ENCODE measurements at regions of chr7 and their contacts with region 1.

Region 1: DNA sequence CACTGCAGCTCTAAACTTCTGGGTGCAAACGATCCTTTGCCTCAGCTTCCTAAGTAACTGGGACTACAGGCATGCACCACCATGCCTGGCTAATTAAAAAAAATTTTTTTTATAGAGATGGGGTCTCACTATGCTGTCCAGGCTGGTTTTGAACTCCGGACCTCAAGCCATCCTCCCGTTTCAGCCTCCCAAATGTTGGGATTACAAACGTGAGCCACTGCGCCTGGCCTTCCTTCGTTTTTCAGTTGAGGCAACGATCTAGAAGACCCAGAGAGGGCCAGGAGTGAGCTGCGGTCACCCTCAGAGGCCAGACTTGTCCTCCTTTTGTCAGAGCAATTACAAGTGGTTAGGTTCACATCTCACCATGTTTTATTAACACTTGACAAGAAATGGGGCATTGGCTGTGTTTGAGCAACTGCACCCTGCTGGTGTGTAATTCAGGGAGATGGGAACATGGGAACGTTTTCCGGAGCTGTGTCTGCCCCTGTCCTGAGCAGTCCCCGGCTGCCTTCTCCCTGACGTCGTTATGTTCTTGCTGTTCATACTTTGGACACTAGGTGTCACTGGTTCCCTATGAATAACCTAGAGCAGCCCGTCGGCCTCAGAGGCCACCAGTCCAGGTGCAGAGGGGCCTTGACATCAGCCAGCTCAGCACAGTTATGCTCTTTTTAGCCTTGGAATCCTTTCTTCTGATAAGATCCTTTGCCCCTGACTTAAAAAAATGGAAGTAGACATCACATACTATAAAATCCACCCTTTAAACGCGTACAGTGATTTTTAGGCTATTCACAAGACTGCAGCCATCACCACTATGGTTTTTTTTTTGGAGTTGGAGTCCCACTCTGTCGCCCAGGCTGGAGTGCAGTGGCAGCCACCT is 375.0 kb downstream of the TYW1 start:
- DNase-seq: peak; percentile 92
- H3K4me3 ChIP-seq: no peak overlapping the region
- H3K27ac ChIP-seq: no peak overlapping the region
- H3K4me1 ChIP-seq: no peaks in the 10 kb centered on the region
- H3K27me3 ChIP-seq: no peaks in the 10 kb centered on the region
- CTCF ChIP-seq: peak; percentile 94
- EP300 ChIP-seq: no peak
- RAD21 ChIP-seq: peak; percentile 98

Region 2: GRCh38 chr7:66886152-66886551 is 485.5 kb before region 1 on chr7:
- CTCF ChIA-PET with region 1: no interaction called
- POLR2A ChIA-PET with region 1: no interaction called
- DNase-seq: no peak
- H3K4me3 ChIP-seq: no peak overlapping the region
- H3K27ac ChIP-seq: no peak overlapping the region
- H3K4me1 ChIP-seq: no peaks in the 10 kb centered on the region
- H3K27me3 ChIP-seq: no peaks in the 10 kb centered on the region
- CTCF ChIP-seq: no peak
- EP300 ChIP-seq: no peak
- RAD21 ChIP-seq: no peak

Region 3: DNA sequence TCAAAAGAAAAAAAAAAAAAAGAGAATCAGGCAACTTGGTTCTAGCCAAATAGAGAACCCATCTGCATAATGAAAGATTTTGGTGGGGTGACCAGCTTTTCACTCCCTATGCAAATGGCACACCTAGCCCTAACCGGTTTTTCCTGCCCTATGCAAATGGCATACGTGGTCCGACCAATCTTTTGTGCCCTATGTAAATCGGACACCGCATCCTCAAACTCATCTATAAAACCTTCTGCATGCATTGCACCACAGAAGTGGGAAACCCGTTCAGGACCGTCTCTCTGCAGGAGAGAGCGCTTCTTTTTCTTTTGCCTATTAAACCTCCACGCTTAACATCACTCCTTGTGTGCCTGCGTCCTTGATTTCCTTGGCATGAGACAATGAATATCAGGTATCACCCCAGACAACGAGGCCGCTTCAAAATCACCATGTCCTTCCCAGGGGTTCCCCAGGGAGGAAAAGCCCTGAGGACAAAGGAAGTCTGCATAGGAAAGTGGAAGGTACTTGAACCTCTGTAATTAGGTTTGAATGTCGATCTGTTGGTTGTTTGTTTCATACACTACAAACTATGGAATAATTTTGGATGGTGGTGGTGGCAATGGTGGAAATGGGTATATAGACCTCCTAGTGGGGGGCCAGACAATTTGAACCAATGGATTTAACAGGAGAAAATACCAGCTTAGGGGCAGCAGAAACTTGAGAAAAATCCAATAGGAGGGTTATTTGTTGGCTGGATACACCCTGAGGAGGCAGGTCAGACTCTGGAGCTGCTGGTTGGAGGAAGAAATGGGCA is 21.2 kb after region 1 on chr7:
- CTCF ChIA-PET with region 1: interaction called, 13 read pairs
- POLR2A ChIA-PET with region 1: no interaction called
- DNase-seq: no peak
- H3K4me3 ChIP-seq: no peak overlapping the region
- H3K27ac ChIP-seq: no peak overlapping the region
- H3K4me1 ChIP-seq: no peaks in the 10 kb centered on the region; a peak in 1 of 4 replicates
- H3K27me3 ChIP-seq: no peaks in the 10 kb centered on the region
- CTCF ChIP-seq: no peak
- EP300 ChIP-seq: no peak
- RAD21 ChIP-seq: no peak

Region 4: GRCh38 chr7:67619175-67619574 is 247.5 kb after region 1 on chr7:
- CTCF ChIA-PET with region 1: interaction called, 17 read pairs
- POLR2A ChIA-PET with region 1: no interaction called
- DNase-seq: peak; percentile 79
- H3K4me3 ChIP-seq: no peak overlapping the region
- H3K27ac ChIP-seq: peak overlapping the region in 1 of 2 experiments; percentile 89; a peak in 2 of 4 replicates
- H3K4me1 ChIP-seq: peaks cover 0 to 23% of the 10 kb centered on the region in 2 experiments; a peak in 2 of 4 replicates
- H3K27me3 ChIP-seq: no peaks in the 10 kb centered on the region; the same call in 1 of the 2 replicates
- CTCF ChIP-seq: no peak
- EP300 ChIP-seq: peak in 1 of 2 experiments; percentile 68; a peak in 1 of 4 replicates
- RAD21 ChIP-seq: peak; percentile 75